ENCODE measurements at regions of chr2 and their contacts with region 1.

Region 1: DNA sequence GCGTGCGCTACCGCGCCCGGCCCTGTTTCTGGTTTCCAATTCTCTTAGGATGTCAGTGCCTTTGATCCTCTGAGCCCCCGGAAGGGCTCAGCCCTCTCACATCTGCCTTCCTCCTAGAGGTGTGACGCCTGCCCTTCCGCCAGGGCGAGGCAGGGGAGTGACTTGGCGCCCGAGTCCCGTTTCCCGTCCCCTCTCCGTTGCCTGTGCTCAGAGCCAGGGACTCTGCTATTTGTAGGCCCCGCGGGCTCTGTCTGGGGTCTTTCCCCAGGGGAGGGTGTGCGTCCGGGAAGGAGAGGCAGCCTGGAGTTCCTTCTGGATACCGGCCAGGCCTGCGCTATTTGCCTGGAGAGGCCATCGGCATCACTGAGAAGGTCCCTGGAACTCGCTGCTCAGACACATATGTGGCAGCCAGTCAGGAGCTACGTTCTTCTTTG is 103.7 kb upstream of the TAF1B start:
- DNase-seq: peak; percentile 90 to 93 (median 90)
- ATAC-seq: peak; percentile 71 to 94 (median 86)
- H3K4me3 ChIP-seq: peak overlapping the region in 10 of 12 donors; percentile 23 to 53 (median 44)
- H3K27ac ChIP-seq: peak overlapping the region; percentile 35 to 94 (median 86)
- H3K4me1 ChIP-seq: peaks cover 0 to 33% (median 24%) of the 10 kb centered on the region in 12 donors
- H3K27me3 ChIP-seq: no peaks in the 10 kb centered on the region
- CTCF ChIP-seq: peak in 1 of 12 donors; percentile 8
- POLR2A ChIP-seq: no peak

Region 2: DNA sequence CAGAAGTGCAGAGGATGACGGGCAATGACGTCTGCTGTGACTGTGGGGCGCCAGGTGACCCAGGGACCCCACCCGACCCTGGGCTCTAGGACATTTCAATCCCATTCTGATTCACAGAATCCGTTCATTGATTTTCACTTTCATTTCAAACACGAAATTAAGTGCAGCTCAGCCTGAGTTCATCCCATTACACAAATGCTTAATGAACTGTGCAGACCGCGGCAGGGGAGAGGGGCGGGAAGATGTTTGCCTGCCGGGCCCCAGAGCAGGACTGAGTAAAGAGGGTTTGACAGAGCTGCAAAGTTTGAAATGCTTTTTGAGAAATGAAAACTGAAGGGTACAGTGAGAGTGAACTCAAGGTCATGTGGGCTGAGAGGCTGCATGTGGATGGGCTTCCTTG is 383.3 kb before region 1 on chr2:
- intact Hi-C with region 1: no loop called
- DNase-seq: no peak
- ATAC-seq: no peak
- H3K4me3 ChIP-seq: no peak overlapping the region
- H3K27ac ChIP-seq: no peak overlapping the region
- H3K4me1 ChIP-seq: no peaks in the 10 kb centered on the region
- H3K27me3 ChIP-seq: no peaks in the 10 kb centered on the region
- CTCF ChIP-seq: no peak
- POLR2A ChIP-seq: no peak

Region 3: GRCh38 chr2:9638532-9638931 is 101.0 kb before region 1 on chr2:
- intact Hi-C with region 1: loop called in 2 of 10 experiments (anchors 1 to 5 kb)
- DNase-seq: peak; percentile 77 to 93 (median 88)
- ATAC-seq: peak; percentile 91 to 95 (median 93)
- H3K4me3 ChIP-seq: peak overlapping the region in 1 of 12 donors; percentile 1
- H3K27ac ChIP-seq: peak overlapping the region in 8 of 12 donors; percentile 7 to 73 (median 36)
- H3K4me1 ChIP-seq: peaks cover 0 to 28% (median 20%) of the 10 kb centered on the region in 12 donors
- H3K27me3 ChIP-seq: no peaks in the 10 kb centered on the region
- CTCF ChIP-seq: no peak
- POLR2A ChIP-seq: no peak

Region 4: DNA sequence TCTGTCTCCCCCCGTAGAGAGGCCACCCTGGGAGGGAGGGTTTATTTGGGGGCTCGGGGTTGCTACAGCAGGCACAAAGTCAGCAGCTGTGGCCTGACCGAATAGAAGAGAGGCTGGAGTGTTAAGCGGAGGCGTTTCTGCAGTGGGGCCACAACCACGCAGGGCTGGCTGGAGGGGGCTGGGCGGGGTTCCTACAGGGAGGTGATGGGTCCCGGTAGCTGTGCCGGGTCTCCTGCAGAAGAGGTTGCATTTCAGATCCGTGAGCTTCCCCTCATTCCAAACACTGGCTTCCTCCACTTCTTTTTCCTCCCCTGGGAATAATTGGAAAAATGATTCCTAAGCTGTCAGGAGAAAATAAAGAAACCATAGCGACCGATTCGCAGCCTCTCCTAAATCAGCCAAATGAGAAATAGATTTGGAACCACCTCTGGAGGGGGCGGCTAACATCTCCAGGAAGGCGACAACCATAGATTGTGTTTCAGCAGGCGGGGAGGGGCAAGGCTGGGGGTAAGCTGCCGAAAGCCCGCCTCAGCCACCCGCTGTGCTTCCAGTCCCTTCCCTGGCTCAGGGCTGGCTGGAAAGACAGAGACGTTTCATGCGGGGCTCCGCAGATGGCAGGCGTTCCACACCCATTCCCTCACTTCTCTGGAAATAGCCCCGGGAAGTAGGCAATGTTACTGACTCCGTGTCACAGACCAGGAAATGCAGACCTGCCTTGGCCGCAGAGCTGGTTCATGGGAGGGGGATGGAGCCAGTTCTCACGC is 18.1 kb after region 1 on chr2:
- intact Hi-C with region 1: loop called in 1 of 10 experiments (anchors 1 kb)
- DNase-seq: peak; percentile 71 to 79 (median 78)
- ATAC-seq: peak; percentile 51 to 88 (median 82)
- H3K4me3 ChIP-seq: peak overlapping the region in 11 of 12 donors; percentile 5 to 50 (median 37)
- H3K27ac ChIP-seq: peak overlapping the region in 11 of 12 donors; percentile 28 to 94 (median 73)
- H3K4me1 ChIP-seq: peaks cover 0 to 76% (median 50%) of the 10 kb centered on the region in 12 donors
- H3K27me3 ChIP-seq: no peaks in the 10 kb centered on the region
- CTCF ChIP-seq: no peak
- POLR2A ChIP-seq: peak in 1 of 2 donors; percentile 23

Region 5: DNA sequence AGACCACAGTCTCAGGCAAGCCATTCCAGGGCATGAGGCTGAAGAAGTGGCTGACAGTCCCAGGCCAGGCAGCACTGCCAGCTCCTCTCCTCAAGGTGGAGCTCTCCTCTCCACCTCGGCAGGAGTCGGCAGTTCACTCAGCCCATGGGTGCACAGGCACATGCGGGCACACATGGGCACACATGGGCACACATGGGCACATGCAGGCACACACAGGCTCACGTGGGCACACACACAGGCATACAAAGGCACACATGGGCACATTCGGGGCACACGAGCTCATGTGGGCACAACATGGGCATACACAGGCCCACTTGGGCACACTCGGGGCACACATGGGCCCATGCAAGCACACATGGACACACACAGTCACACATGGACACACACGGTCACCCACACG is 38.5 kb after region 1 on chr2:
- intact Hi-C with region 1: no loop called
- DNase-seq: peak in 3 of 5 donors; percentile 28 to 46 (median 33)
- ATAC-seq: peak in 1 of 4 donors; percentile 14
- H3K4me3 ChIP-seq: no peak overlapping the region
- H3K27ac ChIP-seq: no peak overlapping the region
- H3K4me1 ChIP-seq: peaks cover 0 to 26% (median 10%) of the 10 kb centered on the region in 12 donors
- H3K27me3 ChIP-seq: no peaks in the 10 kb centered on the region
- CTCF ChIP-seq: peak in 7 of 12 donors; percentile 7 to 39 (median 32)
- POLR2A ChIP-seq: no peak